ENCODE measurements at regions of chr5 and their contacts with region 1.

Region 1: DNA sequence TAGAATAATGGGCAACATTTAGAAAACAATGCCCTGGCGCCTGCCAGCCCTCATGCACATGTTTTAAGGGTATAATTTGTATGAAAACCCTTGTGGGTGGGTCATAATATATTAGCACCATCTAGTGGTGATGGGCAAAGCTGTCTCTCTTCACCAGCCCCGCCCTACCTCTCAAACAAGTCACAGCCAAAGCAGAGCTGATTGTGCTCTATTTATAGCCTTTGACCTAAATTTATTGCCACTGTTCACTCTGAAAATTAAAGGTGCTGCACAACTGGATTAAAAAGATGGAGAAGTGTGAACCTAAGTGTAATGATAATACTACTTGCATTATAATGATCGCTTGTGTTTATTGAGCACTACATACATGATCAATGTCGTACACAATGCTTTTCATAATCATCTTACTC is 131.9 kb upstream of the ANKH start:
- DNase-seq: peak; percentile 89
- H3K4me3 ChIP-seq: no peak overlapping the region
- H3K27ac ChIP-seq: no peak overlapping the region
- H3K4me1 ChIP-seq: peaks cover 28% of the 10 kb centered on the region
- H3K27me3 ChIP-seq: no peaks in the 10 kb centered on the region

Region 2: DNA sequence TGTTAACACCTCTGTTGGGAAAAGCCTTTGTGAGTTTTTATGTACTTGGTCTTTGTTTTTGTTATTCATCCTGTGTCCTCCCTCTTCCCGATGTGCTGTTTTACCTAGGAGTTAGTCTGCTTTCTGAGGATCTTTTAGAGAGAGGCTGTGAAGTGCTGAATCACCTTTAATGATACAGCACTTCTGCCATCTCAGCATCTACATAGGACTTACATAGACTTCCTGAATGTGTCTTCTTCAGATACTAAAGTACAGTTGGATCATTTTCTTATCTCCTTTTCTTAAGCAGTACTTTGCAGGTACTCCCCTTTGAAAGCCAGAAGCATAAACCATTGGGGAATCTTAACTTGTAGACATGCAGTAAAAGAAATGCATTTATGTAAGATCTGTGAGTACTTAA is 307.5 kb before region 1 on chr5:
- in situ Hi-C with region 1: loop called (anchors 10 kb)
- DNase-seq: peak; percentile 28
- H3K4me3 ChIP-seq: no peak overlapping the region
- H3K27ac ChIP-seq: no peak overlapping the region
- H3K4me1 ChIP-seq: no peaks in the 10 kb centered on the region
- H3K27me3 ChIP-seq: no peaks in the 10 kb centered on the region

Region 3: GRCh38 chr5:14727428-14727865 is 276.1 kb before region 1 on chr5:
- in situ Hi-C with region 1: loop called (anchors 5 kb)
- DNase-seq: peak; percentile 87
- H3K4me3 ChIP-seq: no peak overlapping the region
- H3K27ac ChIP-seq: no peak overlapping the region
- H3K4me1 ChIP-seq: peaks cover 14% of the 10 kb centered on the region
- H3K27me3 ChIP-seq: no peaks in the 10 kb centered on the region

Region 4: GRCh38 chr5:14879937-14880589 is 123.5 kb before region 1 on chr5:
- in situ Hi-C with region 1: loop called (anchors 10 kb)
- DNase-seq: peak; percentile 59
- H3K4me3 ChIP-seq: no peak overlapping the region
- H3K27ac ChIP-seq: no peak overlapping the region
- H3K4me1 ChIP-seq: peaks cover 14% of the 10 kb centered on the region
- H3K27me3 ChIP-seq: no peaks in the 10 kb centered on the region

Measured in GM23248 (cell line).